ENCODE measurements at regions of chr2 and their contacts with region 1.

Region 1: GRCh38 chr2:156589381-156590079 is 153.4 kb downstream of the GPD2 start:
- DNase-seq: peak in 2 of 4 experiments; percentile 58 to 64
- ATAC-seq: peak; percentile 91
- H3K4me3 ChIP-seq: no peak overlapping the region
- H3K27ac ChIP-seq: no peak overlapping the region
- H3K4me1 ChIP-seq: no peaks in the 10 kb centered on the region
- H3K27me3 ChIP-seq: no peaks in the 10 kb centered on the region
- CTCF ChIP-seq: peak; percentile 38 to 78 (median 61); a peak in 5 of 6 replicates
- EP300 ChIP-seq: no peak
- POLR2A ChIP-seq: no peak
- RAD21 ChIP-seq: peak; percentile 94 to 95

Region 2: GRCh38 chr2:155377266-155377680 is 1212.3 kb before region 1 on chr2:
- CTCF ChIA-PET with region 1: no interaction called
- POLR2A ChIA-PET with region 1: no interaction called
- in situ Hi-C with region 1: no loop called
- intact Hi-C with region 1: loop called (anchors 5 kb)
- DNase-seq: peak in 2 of 4 experiments; percentile 15 to 25
- ATAC-seq: peak; percentile 75
- H3K4me3 ChIP-seq: no peak overlapping the region
- H3K27ac ChIP-seq: no peak overlapping the region
- H3K4me1 ChIP-seq: no peaks in the 10 kb centered on the region
- H3K27me3 ChIP-seq: no peaks in the 10 kb centered on the region
- CTCF ChIP-seq: peak in 2 of 3 experiments; percentile 19 to 45; a peak in 2 of 6 replicates
- EP300 ChIP-seq: no peak
- POLR2A ChIP-seq: no peak
- RAD21 ChIP-seq: peak; percentile 58 to 76

Region 3: GRCh38 chr2:156192468-156192867 is 397.1 kb before region 1 on chr2:
- CTCF ChIA-PET with region 1: no interaction called
- POLR2A ChIA-PET with region 1: no interaction called
- in situ Hi-C with region 1: no loop called
- intact Hi-C with region 1: loop called (anchors 2 kb)
- DNase-seq: no peak
- ATAC-seq: peak; percentile 64; the same call in 2 of the 3 replicates
- H3K4me3 ChIP-seq: no peak overlapping the region
- H3K27ac ChIP-seq: no peak overlapping the region
- H3K4me1 ChIP-seq: no peaks in the 10 kb centered on the region
- H3K27me3 ChIP-seq: no peaks in the 10 kb centered on the region
- CTCF ChIP-seq: peak in 2 of 3 experiments; percentile 4 to 52; a peak in 2 of 6 replicates
- EP300 ChIP-seq: no peak
- POLR2A ChIP-seq: no peak
- RAD21 ChIP-seq: peak; percentile 31 to 55; a peak in 3 of 4 replicates

Region 4: GRCh38 chr2:156332534-156333273 is 256.8 kb before region 1 on chr2 and contains the start of gene NR4A2:
- CTCF ChIA-PET with region 1: interaction called, 6 read pairs
- POLR2A ChIA-PET with region 1: no interaction called
- in situ Hi-C with region 1: loop called (anchors 10 kb)
- intact Hi-C with region 1: loop called (anchors 1 kb)
- DNase-seq: peak; percentile 86 to 95 (median 90)
- ATAC-seq: peak; percentile 81
- H3K4me3 ChIP-seq: peak within 1 kb of the TSS; percentile 80
- H3K27ac ChIP-seq: peak within 1 kb of the TSS; percentile 88
- H3K4me1 ChIP-seq: peaks cover 6 to 27% of the 10 kb centered on the region in 2 experiments
- H3K27me3 ChIP-seq: no peaks in the 10 kb centered on the region
- CTCF ChIP-seq: no peak; a peak in 1 of 6 replicates
- EP300 ChIP-seq: no peak
- POLR2A ChIP-seq: peak; percentile 76
- RAD21 ChIP-seq: no peak
- polyA plus RNA-seq, gene NR4A2: 1.3 to 2.1 TPM

Region 5: GRCh38 chr2:156892467-156893281 is 303.1 kb after region 1 on chr2:
- CTCF ChIA-PET with region 1: no interaction called
- POLR2A ChIA-PET with region 1: no interaction called
- in situ Hi-C with region 1: no loop called
- intact Hi-C with region 1: loop called (anchors 5 kb)
- DNase-seq: peak in 2 of 4 experiments; percentile 35 to 53
- ATAC-seq: peak; percentile 95
- H3K4me3 ChIP-seq: peak overlapping the region; percentile 16
- H3K27ac ChIP-seq: no peak overlapping the region
- H3K4me1 ChIP-seq: no peaks in the 10 kb centered on the region
- H3K27me3 ChIP-seq: no peaks in the 10 kb centered on the region
- CTCF ChIP-seq: peak; percentile 29 to 64 (median 61); a peak in 5 of 6 replicates
- EP300 ChIP-seq: no peak
- POLR2A ChIP-seq: no peak
- RAD21 ChIP-seq: peak; percentile 83 to 87

Region 6: GRCh38 chr2:157194097-157194688 is 604.7 kb after region 1 on chr2:
- CTCF ChIA-PET with region 1: interaction called, 6 read pairs
- POLR2A ChIA-PET with region 1: no interaction called
- in situ Hi-C with region 1: no loop called
- intact Hi-C with region 1: loop called (anchors 5 kb)
- DNase-seq: peak; percentile 39 to 84 (median 51)
- ATAC-seq: peak; percentile 88
- H3K4me3 ChIP-seq: no peak overlapping the region
- H3K27ac ChIP-seq: no peak overlapping the region
- H3K4me1 ChIP-seq: peaks cover 0 to 10% of the 10 kb centered on the region in 2 experiments; a peak in 2 of 5 replicates
- H3K27me3 ChIP-seq: no peaks in the 10 kb centered on the region
- CTCF ChIP-seq: peak; percentile 58 to 93 (median 74)
- EP300 ChIP-seq: 0 out of 2 replicates have a peak, but pooled peaks have one; percentile 11
- POLR2A ChIP-seq: no peak
- RAD21 ChIP-seq: peak; percentile 96 to 97

Measured in K562 (cell line).